GM12878 (cell line): ENCODE measurements at regions of chr4 and their contacts with region 1.

Region 1: DNA sequence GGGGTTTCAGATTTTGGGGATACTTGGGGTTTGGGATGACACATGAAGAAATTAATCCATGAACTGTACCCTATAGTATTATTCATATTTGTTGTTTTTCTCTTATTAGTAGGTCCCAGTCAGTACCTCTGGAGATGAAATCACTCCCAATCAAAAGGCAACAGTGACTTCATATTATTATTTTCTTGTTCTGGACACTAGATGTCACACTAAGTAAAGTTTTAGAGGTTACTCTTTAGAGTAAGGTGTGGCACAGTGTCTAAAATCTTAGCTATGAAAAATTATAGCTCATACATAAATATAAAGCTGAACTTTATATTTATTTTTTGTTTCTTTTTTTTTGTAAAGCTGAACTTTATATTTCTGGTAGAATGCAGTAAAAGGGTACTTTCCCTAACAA is 35.1 kb downstream of the FAM114A1 start:
- DNase-seq: no peak
- ATAC-seq: peak; percentile 95
- H3K4me3 ChIP-seq: no peak overlapping the region
- H3K27ac ChIP-seq: no peak overlapping the region
- H3K4me1 ChIP-seq: no peaks in the 10 kb centered on the region
- H3K27me3 ChIP-seq: no peaks in the 10 kb centered on the region
- CTCF ChIP-seq: peak in 2 of 3 experiments; percentile 23 to 61; a peak in 3 of 6 replicates
- EP300 ChIP-seq: no peak
- POLR2A ChIP-seq: no peak
- RAD21 ChIP-seq: peak; percentile 79

Region 2: DNA sequence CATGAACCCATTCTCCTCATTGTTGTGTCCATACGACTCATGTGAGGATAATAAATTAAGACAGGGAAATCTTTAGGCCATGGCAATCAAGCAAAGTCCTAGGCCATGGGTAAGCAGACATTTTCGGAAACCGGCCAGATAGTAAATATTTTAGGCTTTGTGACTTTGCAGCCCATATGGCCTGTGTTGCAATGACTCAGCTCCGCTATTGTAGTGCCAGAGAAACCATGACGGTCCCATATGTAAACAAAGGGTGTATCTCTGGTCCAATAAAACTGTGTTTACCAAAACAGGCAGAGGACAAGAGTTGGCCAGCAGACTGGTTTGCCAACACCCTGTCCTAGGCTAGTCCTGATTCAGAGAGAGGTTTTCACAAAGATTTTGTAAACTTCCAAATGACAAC is 30.1 kb before region 1 on chr4:
- CTCF ChIA-PET with region 1: interaction called, 14 read pairs
- POLR2A ChIA-PET with region 1: no interaction called
- RAD21 ChIA-PET with region 1: interaction called, 6 read pairs
- SMC1A ChIA-PET with region 1: interaction called, 5 read pairs
- in situ Hi-C with region 1: no loop called
- intact Hi-C with region 1: no loop called
- DNase-seq: no peak
- ATAC-seq: no peak
- H3K4me3 ChIP-seq: no peak overlapping the region
- H3K27ac ChIP-seq: no peak overlapping the region
- H3K4me1 ChIP-seq: peaks cover 7% of the 10 kb centered on the region
- H3K27me3 ChIP-seq: no peaks in the 10 kb centered on the region
- CTCF ChIP-seq: no peak
- EP300 ChIP-seq: no peak
- POLR2A ChIP-seq: no peak
- RAD21 ChIP-seq: no peak

Region 3: DNA sequence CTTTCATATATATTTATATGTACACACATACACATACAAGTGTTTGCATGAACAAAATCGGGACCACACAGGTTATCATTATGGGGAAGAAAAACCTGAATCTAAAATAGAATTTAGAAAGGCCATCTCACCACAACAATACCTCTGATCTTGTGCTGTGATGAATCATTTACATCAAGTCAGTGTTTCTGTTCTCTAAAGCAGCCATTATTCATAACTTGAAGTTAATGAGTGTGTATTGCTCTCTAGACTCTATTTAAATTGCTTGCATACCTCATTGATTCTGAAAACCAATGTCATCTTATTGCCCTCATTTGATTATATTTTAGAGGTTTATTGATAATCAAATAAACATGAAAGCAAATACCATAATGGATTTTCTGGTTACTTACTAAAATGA is 36.5 kb after region 1 on chr4:
- CTCF ChIA-PET with region 1: interaction called, 4 read pairs
- POLR2A ChIA-PET with region 1: interaction called, 4 read pairs
- RAD21 ChIA-PET with region 1: interaction called, 10 read pairs
- SMC1A ChIA-PET with region 1: interaction called, 6 read pairs
- in situ Hi-C with region 1: no loop called
- intact Hi-C with region 1: no loop called
- DNase-seq: peak; percentile 68
- ATAC-seq: peak; percentile 95
- H3K4me3 ChIP-seq: no peak overlapping the region
- H3K27ac ChIP-seq: no peak overlapping the region; the same call in 1 of the 2 replicates
- H3K4me1 ChIP-seq: peaks cover 20% of the 10 kb centered on the region
- H3K27me3 ChIP-seq: no peaks in the 10 kb centered on the region
- CTCF ChIP-seq: no peak
- EP300 ChIP-seq: peak; percentile 58 to 89; a peak in 2 of 4 replicates
- POLR2A ChIP-seq: no peak
- RAD21 ChIP-seq: no peak

Region 4: DNA sequence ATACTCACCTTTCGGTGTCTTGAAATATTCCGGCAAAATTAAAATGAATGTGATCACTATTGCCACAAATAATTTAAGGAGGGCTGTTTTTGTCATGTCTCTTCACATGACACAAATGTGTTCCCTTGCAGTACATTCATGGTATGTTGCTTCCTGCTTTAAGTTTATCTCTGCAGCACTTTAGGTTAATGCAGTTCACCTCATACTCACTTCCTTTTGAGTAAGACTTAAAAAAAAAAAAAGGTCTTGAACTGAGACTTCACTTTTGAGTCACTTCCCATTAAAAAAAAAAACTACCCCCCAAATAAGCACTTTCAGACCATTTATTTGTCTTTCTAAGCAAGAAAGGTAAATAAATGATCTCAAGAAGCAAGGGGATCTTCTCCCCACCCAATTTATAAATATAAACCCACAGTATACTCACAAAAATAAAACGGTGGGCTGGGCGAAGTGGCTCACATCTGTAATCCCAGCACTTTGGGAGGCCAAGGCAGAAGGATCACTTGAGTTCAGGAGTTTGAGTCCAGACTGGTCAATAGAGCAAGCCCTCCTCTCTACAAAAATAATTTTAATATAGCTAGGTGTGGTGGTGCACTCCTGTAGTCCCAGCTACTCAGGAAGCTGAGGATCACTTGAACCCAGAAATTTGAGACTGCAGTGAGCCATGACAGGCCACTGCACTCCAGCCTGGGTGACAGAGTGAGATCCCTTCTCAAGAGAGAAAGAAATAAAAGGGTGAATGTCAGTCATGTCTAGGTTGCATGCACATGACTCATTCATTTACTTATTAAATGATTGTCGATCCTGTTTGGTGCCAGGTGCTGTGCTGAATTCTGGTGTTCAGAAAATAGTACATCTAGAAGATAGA is 129.8 kb after region 1 on chr4 and contains the start of gene TMEM156:
- CTCF ChIA-PET with region 1: interaction called, 22 read pairs
- POLR2A ChIA-PET with region 1: interaction called, 3 read pairs
- RAD21 ChIA-PET with region 1: interaction called, 12 read pairs
- SMC1A ChIA-PET with region 1: interaction called, 15 read pairs
- in situ Hi-C with region 1: no loop called
- intact Hi-C with region 1: loop called (anchors 5 kb)
- DNase-seq: peak; percentile 82
- ATAC-seq: peak; percentile 70
- H3K4me3 ChIP-seq: peak within 1 kb of the TSS; percentile 79
- H3K27ac ChIP-seq: peak within 1 kb of the TSS; percentile 88
- H3K4me1 ChIP-seq: peaks cover 28% of the 10 kb centered on the region
- H3K27me3 ChIP-seq: no peaks in the 10 kb centered on the region
- CTCF ChIP-seq: no peak
- EP300 ChIP-seq: peak; percentile 56 to 90; a peak in 2 of 4 replicates
- POLR2A ChIP-seq: peak; percentile 39; the same call in 1 of the 2 replicates
- RAD21 ChIP-seq: no peak
- polyA plus RNA-seq, gene TMEM156: 35.0 to 36.2 TPM

Region 5: DNA sequence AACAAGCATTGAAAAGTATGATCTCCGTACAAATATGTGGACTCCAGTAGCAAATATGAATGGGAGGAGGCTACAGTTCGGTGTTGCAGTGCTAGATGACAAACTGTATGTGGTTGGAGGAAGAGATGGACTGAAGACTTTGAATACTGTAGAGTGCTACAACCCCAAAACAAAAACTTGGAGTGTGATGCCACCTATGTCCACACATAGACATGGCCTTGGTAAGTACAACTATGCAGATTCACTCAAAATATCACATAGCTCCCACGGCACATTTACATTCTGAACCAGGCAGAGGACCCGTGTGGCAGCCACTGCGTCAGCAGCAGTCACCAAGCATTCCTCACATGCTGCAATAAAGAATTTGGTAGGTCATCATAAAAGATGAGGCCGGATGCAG is 200.6 kb after region 1 on chr4:
- CTCF ChIA-PET with region 1: interaction called, 10 read pairs
- POLR2A ChIA-PET with region 1: no interaction called
- RAD21 ChIA-PET with region 1: interaction called, 23 read pairs
- SMC1A ChIA-PET with region 1: interaction called, 13 read pairs
- in situ Hi-C with region 1: no loop called
- intact Hi-C with region 1: no loop called
- DNase-seq: no peak
- ATAC-seq: peak; percentile 71
- H3K4me3 ChIP-seq: no peak overlapping the region
- H3K27ac ChIP-seq: no peak overlapping the region
- H3K4me1 ChIP-seq: no peaks in the 10 kb centered on the region
- H3K27me3 ChIP-seq: no peaks in the 10 kb centered on the region
- CTCF ChIP-seq: peak in 1 of 3 experiments; percentile 25; a peak in 1 of 6 replicates
- EP300 ChIP-seq: no peak
- POLR2A ChIP-seq: no peak
- RAD21 ChIP-seq: peak; percentile 26; the same call in 1 of the 2 replicates

Region 6: DNA sequence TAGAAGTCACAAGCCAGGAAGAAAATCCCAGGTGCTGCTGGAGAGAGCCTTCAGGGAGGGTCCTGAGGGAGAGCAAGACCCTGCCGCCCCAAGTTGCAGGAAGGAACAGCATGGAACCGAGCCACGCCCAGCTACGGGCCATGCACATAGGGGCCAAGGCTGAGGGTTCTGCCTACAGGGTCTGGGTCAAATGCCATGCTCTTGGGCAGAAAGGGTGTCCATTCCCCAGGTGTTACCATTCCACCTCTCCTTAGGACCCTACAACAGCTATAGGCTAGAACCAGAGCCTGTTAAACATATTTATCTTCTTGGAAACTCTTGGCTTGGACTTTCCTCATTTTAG is 533.5 kb after region 1 on chr4:
- CTCF ChIA-PET with region 1: interaction called, 10 read pairs
- POLR2A ChIA-PET with region 1: no interaction called
- RAD21 ChIA-PET with region 1: interaction called, 3 read pairs
- SMC1A ChIA-PET with region 1: interaction called, 4 read pairs
- in situ Hi-C with region 1: loop called (anchors 25 kb)
- intact Hi-C with region 1: no loop called
- DNase-seq: no peak
- ATAC-seq: no peak
- H3K4me3 ChIP-seq: no peak overlapping the region
- H3K27ac ChIP-seq: no peak overlapping the region
- H3K4me1 ChIP-seq: no peaks in the 10 kb centered on the region
- H3K27me3 ChIP-seq: no peaks in the 10 kb centered on the region
- CTCF ChIP-seq: no peak
- EP300 ChIP-seq: no peak
- POLR2A ChIP-seq: no peak
- RAD21 ChIP-seq: no peak

Region 7: DNA sequence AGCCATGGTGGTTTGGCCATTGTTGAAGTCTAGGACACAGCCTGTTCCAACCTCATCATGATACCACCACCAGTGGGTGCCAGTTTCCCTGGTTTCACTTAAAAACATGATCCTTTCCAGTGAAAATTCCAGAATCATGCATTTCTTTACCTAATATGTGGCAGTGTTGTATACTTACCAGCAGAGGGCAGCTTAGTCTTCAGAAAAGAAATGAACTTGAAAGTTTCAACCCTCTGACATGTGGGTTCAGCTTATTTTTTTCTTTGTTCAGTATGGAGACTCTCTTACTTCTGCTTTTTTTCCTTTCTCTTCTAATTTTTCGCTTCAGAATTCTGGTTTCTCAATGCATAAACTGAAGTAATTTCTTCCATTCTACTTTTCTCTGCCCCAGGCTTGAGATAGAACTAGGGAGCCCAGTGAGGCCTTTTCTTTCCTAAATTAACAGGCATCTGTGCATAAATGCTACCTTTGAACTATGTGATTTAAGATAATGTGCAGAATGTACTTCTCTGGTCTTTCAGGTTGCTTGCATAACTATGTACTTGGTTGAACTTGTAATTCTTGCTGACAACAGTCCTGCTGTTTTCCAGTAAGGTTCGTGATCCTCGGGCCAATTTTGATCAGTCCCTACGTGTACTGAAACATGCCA is 566.9 kb after region 1 on chr4:
- CTCF ChIA-PET with region 1: interaction called, 3 read pairs
- POLR2A ChIA-PET with region 1: no interaction called
- RAD21 ChIA-PET with region 1: interaction called, 7 read pairs
- SMC1A ChIA-PET with region 1: interaction called, 10 read pairs
- in situ Hi-C with region 1: no loop called
- intact Hi-C with region 1: no loop called
- DNase-seq: peak; percentile 48
- ATAC-seq: peak; percentile 95
- H3K4me3 ChIP-seq: no peak overlapping the region
- H3K27ac ChIP-seq: peak overlapping the region; percentile 75; the same call in 1 of the 2 replicates
- H3K4me1 ChIP-seq: peaks cover 7% of the 10 kb centered on the region
- H3K27me3 ChIP-seq: no peaks in the 10 kb centered on the region
- CTCF ChIP-seq: peak; percentile 61 to 79 (median 79); a peak in 4 of 6 replicates
- EP300 ChIP-seq: no peak
- POLR2A ChIP-seq: no peak
- RAD21 ChIP-seq: peak; percentile 90

Region 8: DNA sequence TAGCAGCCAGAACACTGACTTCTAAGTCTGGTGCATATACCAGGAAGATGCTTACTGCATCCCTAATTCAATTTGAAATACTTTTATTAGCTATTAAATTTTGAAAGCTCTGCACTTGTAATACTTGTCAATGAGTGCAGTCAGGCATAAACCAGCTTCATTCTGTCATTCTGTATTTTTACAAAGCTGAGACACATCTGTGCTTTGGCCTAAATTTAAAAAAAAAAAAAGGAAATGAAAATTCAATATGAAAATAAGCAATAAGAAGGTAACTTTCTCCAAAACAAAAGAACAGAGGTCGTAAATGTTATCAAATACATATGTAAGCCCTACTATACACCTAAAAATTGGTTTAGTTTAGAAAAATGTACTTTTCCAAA is 729.0 kb after region 1 on chr4:
- CTCF ChIA-PET with region 1: no interaction called
- POLR2A ChIA-PET with region 1: no interaction called
- RAD21 ChIA-PET with region 1: no interaction called
- SMC1A ChIA-PET with region 1: no interaction called
- in situ Hi-C with region 1: no loop called
- intact Hi-C with region 1: no loop called
- DNase-seq: no peak
- ATAC-seq: peak; percentile 78
- H3K4me3 ChIP-seq: no peak overlapping the region
- H3K27ac ChIP-seq: peak overlapping the region; percentile 59
- H3K4me1 ChIP-seq: peaks cover 26% of the 10 kb centered on the region
- H3K27me3 ChIP-seq: no peaks in the 10 kb centered on the region
- CTCF ChIP-seq: no peak
- EP300 ChIP-seq: peak in 1 of 2 experiments; percentile 70; a peak in 3 of 4 replicates
- POLR2A ChIP-seq: no peak
- RAD21 ChIP-seq: no peak

Region 9: GRCh38 chr4:39713691-39714090 is 811.0 kb after region 1 on chr4:
- CTCF ChIA-PET with region 1: no interaction called
- POLR2A ChIA-PET with region 1: no interaction called
- RAD21 ChIA-PET with region 1: no interaction called
- SMC1A ChIA-PET with region 1: no interaction called
- in situ Hi-C with region 1: no loop called
- intact Hi-C with region 1: no loop called
- DNase-seq: no peak
- ATAC-seq: peak; percentile 51
- H3K4me3 ChIP-seq: peak overlapping the region; percentile 53; the same call in 1 of the 2 replicates
- H3K27ac ChIP-seq: peak overlapping the region; percentile 66
- H3K4me1 ChIP-seq: peaks cover 60% of the 10 kb centered on the region
- H3K27me3 ChIP-seq: no peaks in the 10 kb centered on the region
- CTCF ChIP-seq: no peak
- EP300 ChIP-seq: no peak
- POLR2A ChIP-seq: no peak
- RAD21 ChIP-seq: no peak